ENCODE measurements at regions of chr1 and their contacts with region 1.

Region 1: GRCh38 chr1:94854458-94855306 is 34.5 kb downstream of the SLC44A3 start:
- DNase-seq: peak; percentile 53 to 88 (median 74)
- ATAC-seq: peak; percentile 98
- H3K4me3 ChIP-seq: peak overlapping the region; percentile 50 to 51
- H3K4me3 Mint-ChIP-seq: no peak overlapping the region
- H3K27ac ChIP-seq: peak overlapping the region in 1 of 2 experiments; percentile 13
- H3K27ac Mint-ChIP-seq: no peak overlapping the region
- H3K4me1 ChIP-seq: no peaks in the 10 kb centered on the region
- H3K4me1 Mint-ChIP-seq: no peaks in the 10 kb centered on the region
- H3K27me3 ChIP-seq: no peaks in the 10 kb centered on the region
- H3K27me3 Mint-ChIP-seq: peaks cover 6% of the 10 kb centered on the region
- CTCF ChIP-seq: peak; percentile 72

Region 2: GRCh38 chr1:94843430-94843829 is 11.3 kb before region 1 on chr1:
- CTCF ChIA-PET with region 1: interaction called, 15 read pairs
- POLR2A ChIA-PET with region 1: no interaction called
- intact Hi-C with region 1: no loop called
- DNase-seq: no peak
- ATAC-seq: no peak
- H3K4me3 ChIP-seq: no peak overlapping the region
- H3K4me3 Mint-ChIP-seq: no peak overlapping the region
- H3K27ac ChIP-seq: no peak overlapping the region
- H3K27ac Mint-ChIP-seq: no peak overlapping the region
- H3K4me1 ChIP-seq: no peaks in the 10 kb centered on the region
- H3K4me1 Mint-ChIP-seq: peaks cover 2% of the 10 kb centered on the region
- H3K27me3 ChIP-seq: peaks cover 0 to 4% of the 10 kb centered on the region in 2 experiments
- H3K27me3 Mint-ChIP-seq: peaks cover 10% of the 10 kb centered on the region
- CTCF ChIP-seq: no peak

Region 3: GRCh38 chr1:94873522-94874351 is 19.1 kb after region 1 on chr1:
- CTCF ChIA-PET with region 1: interaction called, 11 read pairs
- POLR2A ChIA-PET with region 1: no interaction called
- intact Hi-C with region 1: no loop called
- DNase-seq: no peak
- ATAC-seq: no peak
- H3K4me3 ChIP-seq: no peak overlapping the region
- H3K4me3 Mint-ChIP-seq: no peak overlapping the region
- H3K27ac ChIP-seq: no peak overlapping the region
- H3K27ac Mint-ChIP-seq: peak overlapping the region; percentile 28
- H3K4me1 ChIP-seq: no peaks in the 10 kb centered on the region
- H3K4me1 Mint-ChIP-seq: peaks cover 8% of the 10 kb centered on the region
- H3K27me3 ChIP-seq: no peaks in the 10 kb centered on the region
- H3K27me3 Mint-ChIP-seq: peaks cover 3% of the 10 kb centered on the region
- CTCF ChIP-seq: no peak

Region 4: GRCh38 chr1:94926915-94927404 is 72.3 kb after region 1 on chr1 and contains the start of gene CNN3:
- CTCF ChIA-PET with region 1: interaction called, 5 read pairs
- POLR2A ChIA-PET with region 1: no interaction called
- intact Hi-C with region 1: loop called in 1 of 2 experiments (anchors 1 kb)
- DNase-seq: peak; percentile 38 to 83 (median 70)
- ATAC-seq: peak; percentile 85
- H3K4me3 ChIP-seq: peak within 1 kb of the TSS; percentile 41 to 62
- H3K4me3 Mint-ChIP-seq: peak within 1 kb of the TSS; percentile 91
- H3K27ac ChIP-seq: peak within 1 kb of the TSS in 1 of 2 experiments; percentile 11
- H3K27ac Mint-ChIP-seq: peak within 1 kb of the TSS; percentile 74
- H3K4me1 ChIP-seq: peaks cover 16% of the 10 kb centered on the region
- H3K4me1 Mint-ChIP-seq: peaks cover 25% of the 10 kb centered on the region
- H3K27me3 ChIP-seq: peaks cover 0 to 4% of the 10 kb centered on the region in 2 experiments
- H3K27me3 Mint-ChIP-seq: peaks cover 9% of the 10 kb centered on the region
- CTCF ChIP-seq: no peak
- total RNA-seq, gene CNN3: 7.5 to 9.4 TPM

Region 5: GRCh38 chr1:95035536-95035935 is 180.9 kb after region 1 on chr1:
- CTCF ChIA-PET with region 1: interaction called, 61 read pairs
- POLR2A ChIA-PET with region 1: interaction called, 3 read pairs
- intact Hi-C with region 1: no loop called
- DNase-seq: no peak
- ATAC-seq: no peak
- H3K4me3 ChIP-seq: no peak overlapping the region
- H3K4me3 Mint-ChIP-seq: no peak overlapping the region
- H3K27ac ChIP-seq: no peak overlapping the region
- H3K27ac Mint-ChIP-seq: no peak overlapping the region
- H3K4me1 ChIP-seq: no peaks in the 10 kb centered on the region
- H3K4me1 Mint-ChIP-seq: no peaks in the 10 kb centered on the region
- H3K27me3 ChIP-seq: no peaks in the 10 kb centered on the region
- H3K27me3 Mint-ChIP-seq: no peaks in the 10 kb centered on the region
- CTCF ChIP-seq: no peak